ENCODE measurements at regions of chr5 and their contacts with region 1.

Region 1: GRCh38 chr5:56610093-56610698 is 205.2 kb upstream of the MAP3K1 start:
- DNase-seq: no peak
- ATAC-seq: no peak
- H3K4me3 ChIP-seq: no peak overlapping the region
- H3K4me3 Mint-ChIP-seq: no peak overlapping the region
- H3K27ac ChIP-seq: no peak overlapping the region
- H3K27ac Mint-ChIP-seq: peak overlapping the region; percentile 38
- H3K4me1 ChIP-seq: peaks cover 33 to 38% of the 10 kb centered on the region in 2 donors
- H3K4me1 Mint-ChIP-seq: peaks cover 68% of the 10 kb centered on the region
- H3K27me3 ChIP-seq: no peaks in the 10 kb centered on the region
- H3K27me3 Mint-ChIP-seq: no peaks in the 10 kb centered on the region
- CTCF ChIP-seq: no peak

Region 2: GRCh38 chr5:56656816-56657729 is 46.9 kb after region 1 on chr5:
- CTCF ChIA-PET with region 1: no interaction called
- POLR2A ChIA-PET with region 1: no interaction called
- intact Hi-C with region 1: loop called (anchors 5 kb)
- DNase-seq: no peak
- ATAC-seq: no peak
- H3K4me3 ChIP-seq: no peak overlapping the region
- H3K4me3 Mint-ChIP-seq: no peak overlapping the region
- H3K27ac ChIP-seq: no peak overlapping the region
- H3K27ac Mint-ChIP-seq: peak overlapping the region; percentile 13
- H3K4me1 ChIP-seq: no peaks in the 10 kb centered on the region
- H3K4me1 Mint-ChIP-seq: peaks cover 14% of the 10 kb centered on the region
- H3K27me3 ChIP-seq: no peaks in the 10 kb centered on the region
- H3K27me3 Mint-ChIP-seq: no peaks in the 10 kb centered on the region
- CTCF ChIP-seq: no peak